K562 (cell line): ENCODE measurements at regions of chr12 and their contacts with region 1.

Region 1: GRCh38 chr12:121888478-121889266 is at the start of gene PSMD9:
- DNase-seq: peak; percentile 96 to 99 (median 97)
- ATAC-seq: peak; percentile 93
- H3K4me3 ChIP-seq: peak within 1 kb of the TSS; percentile 74
- H3K27ac ChIP-seq: peak within 1 kb of the TSS; percentile 92
- H3K4me1 ChIP-seq: peaks cover 25 to 28% of the 10 kb centered on the region in 2 experiments
- H3K27me3 ChIP-seq: no peaks in the 10 kb centered on the region
- CTCF ChIP-seq: peak; percentile 84 to 89 (median 88)
- EP300 ChIP-seq: peak; percentile 82
- POLR2A ChIP-seq: peak; percentile 94
- RAD21 ChIP-seq: peak; percentile 71 to 90
- polyA plus RNA-seq, gene PSMD9: 12.2 to 22.8 TPM

Region 2: GRCh38 chr12:121697098-121697698 is 191.5 kb before region 1 on chr12:
- CTCF ChIA-PET with region 1: interaction called, 5 read pairs
- POLR2A ChIA-PET with region 1: no interaction called
- in situ Hi-C with region 1: loop called (anchors 5 kb)
- intact Hi-C with region 1: loop called (anchors 5 kb)
- DNase-seq: peak; percentile 35 to 65 (median 40)
- ATAC-seq: 0 out of 3 replicates have a peak, but pooled peaks have one; percentile 26
- H3K4me3 ChIP-seq: no peak overlapping the region
- H3K27ac ChIP-seq: no peak overlapping the region
- H3K4me1 ChIP-seq: no peaks in the 10 kb centered on the region; a peak in 1 of 5 replicates
- H3K27me3 ChIP-seq: no peaks in the 10 kb centered on the region
- CTCF ChIP-seq: peak; percentile 47 to 75 (median 49); a peak in 5 of 6 replicates
- EP300 ChIP-seq: no peak
- POLR2A ChIP-seq: no peak
- RAD21 ChIP-seq: peak; percentile 92 to 94

Region 3: GRCh38 chr12:121773011-121773777 is 115.5 kb before region 1 on chr12:
- CTCF ChIA-PET with region 1: interaction called, 5 read pairs
- POLR2A ChIA-PET with region 1: no interaction called
- in situ Hi-C with region 1: no loop called
- intact Hi-C with region 1: loop called (anchors 1 kb)
- DNase-seq: peak; percentile 83 to 87 (median 86)
- ATAC-seq: peak; percentile 88
- H3K4me3 ChIP-seq: no peak overlapping the region
- H3K27ac ChIP-seq: no peak overlapping the region
- H3K4me1 ChIP-seq: peaks cover 14 to 51% of the 10 kb centered on the region in 2 experiments; a peak in 4 of 5 replicates
- H3K27me3 ChIP-seq: no peaks in the 10 kb centered on the region
- CTCF ChIP-seq: peak; percentile 95 to 97 (median 96)
- EP300 ChIP-seq: no peak
- POLR2A ChIP-seq: no peak
- RAD21 ChIP-seq: peak; percentile 94 to 98

Region 4: DNA sequence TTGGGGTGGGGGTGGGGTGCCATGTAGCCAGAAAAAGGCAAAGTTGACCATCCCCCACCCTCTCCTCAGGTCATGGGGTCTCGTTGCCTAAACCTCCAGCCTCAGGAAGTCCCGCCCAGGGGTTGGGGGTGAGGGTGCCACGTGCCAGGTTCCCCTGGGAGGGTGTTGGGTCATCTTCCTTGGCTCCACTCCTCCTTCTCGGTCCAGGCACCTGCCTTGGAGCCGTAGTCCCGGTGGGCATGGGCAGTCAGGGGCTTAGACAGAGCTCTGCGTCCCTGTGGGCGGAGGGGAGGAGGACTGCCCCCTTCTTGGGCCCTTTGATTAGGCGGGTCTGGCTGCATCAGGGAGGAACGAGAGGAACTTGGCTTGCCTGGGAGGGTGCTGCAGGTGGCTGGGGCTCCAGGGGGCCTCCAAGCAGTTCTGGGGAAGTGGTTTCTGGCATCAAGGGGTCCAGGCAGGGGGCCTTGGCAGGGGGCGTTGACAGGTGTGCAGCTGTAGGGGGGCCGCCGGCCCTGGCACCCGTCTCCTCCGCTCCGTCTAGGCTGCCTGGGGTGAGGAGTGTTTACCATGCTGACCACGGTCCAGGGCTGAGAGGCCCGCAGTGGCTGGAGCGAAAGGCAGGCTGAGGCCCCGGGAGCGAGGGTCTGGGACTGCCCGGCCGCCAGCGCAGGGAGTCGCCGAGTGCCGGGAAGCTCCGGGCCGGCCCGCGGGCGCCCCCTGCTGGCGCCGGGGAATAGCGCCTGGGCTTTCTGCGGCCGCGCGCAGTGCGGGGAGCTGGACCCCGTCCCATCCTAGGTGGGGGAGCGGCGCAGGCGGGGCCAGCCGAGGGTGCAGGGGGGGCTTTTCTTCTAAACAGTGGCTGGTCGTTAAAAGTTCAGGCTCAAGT is 77.0 kb before region 1 on chr12:
- CTCF ChIA-PET with region 1: interaction called, 3 read pairs
- POLR2A ChIA-PET with region 1: interaction called, 5 read pairs
- in situ Hi-C with region 1: no loop called
- intact Hi-C with region 1: loop called (anchors 2 kb)
- DNase-seq: peak; percentile 75 to 85 (median 82)
- ATAC-seq: peak; percentile 94
- H3K4me3 ChIP-seq: peak overlapping the region; percentile 53
- H3K27ac ChIP-seq: peak overlapping the region; percentile 31
- H3K4me1 ChIP-seq: peaks cover 27 to 59% of the 10 kb centered on the region in 2 experiments
- H3K27me3 ChIP-seq: no peaks in the 10 kb centered on the region
- CTCF ChIP-seq: peak; percentile 86 to 97 (median 91)
- EP300 ChIP-seq: no peak
- POLR2A ChIP-seq: no peak
- RAD21 ChIP-seq: peak; percentile 92 to 93

Region 5: GRCh38 chr12:121839106-121839992 is 49.3 kb before region 1 on chr12:
- CTCF ChIA-PET with region 1: interaction called, 3 read pairs
- POLR2A ChIA-PET with region 1: interaction called, 3 read pairs
- in situ Hi-C with region 1: no loop called
- intact Hi-C with region 1: loop called (anchors 1 kb)
- DNase-seq: peak; percentile 99 to 100 (median 100)
- ATAC-seq: peak; percentile 97
- H3K4me3 ChIP-seq: peak overlapping the region; percentile 75
- H3K27ac ChIP-seq: peak overlapping the region; percentile 89
- H3K4me1 ChIP-seq: peaks cover 18 to 30% of the 10 kb centered on the region in 2 experiments
- H3K27me3 ChIP-seq: no peaks in the 10 kb centered on the region
- CTCF ChIP-seq: peak; percentile 58 to 77 (median 63); a peak in 5 of 6 replicates
- EP300 ChIP-seq: no peak
- POLR2A ChIP-seq: peak; percentile 91
- RAD21 ChIP-seq: no peak; a peak in 2 of 4 replicates